HCT116 (cell line): ENCODE measurements at regions of chr6 and their contacts with region 1.

Region 1: GRCh38 chr6:10478187-10479040 is 42.7 kb upstream of the GCNT2 start:
- DNase-seq: peak; percentile 41
- ATAC-seq: peak; percentile 79
- H3K4me3 ChIP-seq: no peak overlapping the region
- H3K27ac ChIP-seq: no peak overlapping the region
- H3K4me1 ChIP-seq: peaks cover 0 to 10% of the 10 kb centered on the region in 2 experiments; a peak in 2 of 4 replicates
- H3K27me3 ChIP-seq: no peaks in the 10 kb centered on the region
- CTCF ChIP-seq: peak; percentile 46 to 79 (median 56); a peak in 4 of 6 replicates
- POLR2A ChIP-seq: no peak
- RAD21 ChIP-seq: peak; percentile 85

Region 2: DNA sequence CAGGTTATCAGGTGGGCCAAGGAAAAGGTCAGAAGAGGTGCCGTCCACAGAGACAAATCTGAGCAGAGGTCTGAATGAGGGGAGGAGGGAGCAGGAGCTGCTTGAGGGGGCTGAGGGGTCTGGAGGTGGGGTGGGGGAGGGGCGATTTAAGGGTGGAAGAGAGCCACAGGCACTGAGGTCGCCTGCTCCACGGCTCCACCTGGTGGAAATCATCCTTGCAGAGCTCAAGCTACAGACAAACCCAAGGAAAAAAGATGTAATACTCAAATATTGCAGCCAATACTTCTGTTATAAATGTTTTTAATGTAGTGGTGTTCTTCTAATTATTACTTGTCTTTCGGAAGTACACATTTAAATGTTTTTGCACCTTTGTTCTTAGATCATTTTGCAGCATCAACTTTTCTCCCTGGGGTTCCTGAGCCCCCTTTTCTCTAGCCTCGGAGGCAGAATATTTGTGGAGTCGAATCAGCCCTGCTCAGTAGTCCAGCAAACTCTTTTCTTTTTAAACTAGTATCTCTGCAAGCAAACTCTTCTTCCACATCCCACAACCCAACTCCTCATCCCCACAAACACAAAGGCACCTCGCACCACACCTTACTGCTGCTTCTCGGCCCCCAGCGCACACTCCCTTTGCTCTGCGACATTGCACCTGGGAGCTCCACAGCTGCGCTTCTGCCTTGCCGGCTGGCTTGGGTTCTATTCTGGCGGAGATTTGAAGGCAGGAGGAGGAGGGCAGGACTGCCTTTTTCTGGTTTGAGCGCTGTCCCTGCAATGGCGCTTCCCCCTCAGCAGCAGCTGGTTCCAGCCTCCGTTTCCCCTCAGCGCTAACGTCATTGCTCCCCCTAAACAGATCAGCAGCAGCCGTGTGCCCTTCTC is 12.5 kb before region 1 on chr6:
- CTCF ChIA-PET with region 1: interaction called, 14 read pairs
- POLR2A ChIA-PET with region 1: interaction called, 4 read pairs
- RAD21 ChIA-PET with region 1: no interaction called
- intact Hi-C with region 1: no loop called
- DNase-seq: peak; percentile 65
- ATAC-seq: peak; percentile 90
- H3K4me3 ChIP-seq: no peak overlapping the region
- H3K27ac ChIP-seq: no peak overlapping the region
- H3K4me1 ChIP-seq: peaks cover 0 to 20% of the 10 kb centered on the region in 2 experiments; a peak in 1 of 4 replicates
- H3K27me3 ChIP-seq: no peaks in the 10 kb centered on the region
- CTCF ChIP-seq: peak; percentile 34 to 72 (median 64); a peak in 5 of 6 replicates
- POLR2A ChIP-seq: no peak
- RAD21 ChIP-seq: peak; percentile 63